Upper lobe of right lung (tissue), 1 donor: ENCODE measurements at regions of chr14 and their contacts with region 1.

Region 1: DNA sequence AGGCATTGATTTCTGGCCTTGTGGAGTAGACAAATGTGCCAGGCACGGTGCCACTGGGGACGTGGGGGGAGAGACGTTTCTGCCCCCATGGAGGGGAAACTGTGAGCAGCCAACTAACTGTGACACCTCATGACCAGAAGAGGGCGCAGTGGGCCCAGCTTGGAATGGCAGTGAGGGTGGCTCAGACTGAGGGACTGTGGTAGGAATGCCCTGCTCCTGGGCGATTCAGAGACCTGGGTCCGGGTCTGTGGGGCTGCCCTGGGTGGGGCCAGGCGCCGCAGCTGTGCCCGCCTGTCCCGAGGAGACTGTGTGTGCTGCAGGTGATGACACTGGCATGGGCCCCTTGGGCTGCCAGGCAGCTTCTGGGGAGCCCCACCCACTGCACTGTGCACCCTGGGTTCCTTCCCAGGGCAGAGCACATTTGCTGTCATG is 60.6 kb downstream of the SLC25A47 start:
- DNase-seq: peak; percentile 80
- ATAC-seq: peak; percentile 92
- H3K4me3 ChIP-seq: no peak overlapping the region
- H3K27ac ChIP-seq: no peak overlapping the region
- H3K4me1 ChIP-seq: peaks cover 8% of the 10 kb centered on the region
- H3K27me3 ChIP-seq: no peaks in the 10 kb centered on the region
- CTCF ChIP-seq: peak; percentile 84

Region 2: GRCh38 chr14:100645991-100646331 is 262.2 kb after region 1 on chr14:
- intact Hi-C with region 1: loop called (anchors 2 kb)
- DNase-seq: no peak
- ATAC-seq: no peak
- H3K4me3 ChIP-seq: no peak overlapping the region
- H3K27ac ChIP-seq: no peak overlapping the region
- H3K4me1 ChIP-seq: peaks cover 10% of the 10 kb centered on the region
- H3K27me3 ChIP-seq: no peaks in the 10 kb centered on the region
- CTCF ChIP-seq: no peak